Transverse colon (tissue), 4 donors: ENCODE measurements at regions of chr5 and their contacts with region 1.

Region 1: GRCh38 chr5:103475629-103476240 is 86.9 kb downstream of the NUDT12 start:
- DNase-seq: no peak
- H3K4me3 ChIP-seq: no peak overlapping the region
- H3K27ac ChIP-seq: no peak overlapping the region
- H3K4me1 ChIP-seq: peaks cover 0 to 24% (median 0%) of the 10 kb centered on the region in 4 donors
- H3K27me3 ChIP-seq: no peaks in the 10 kb centered on the region
- CTCF ChIP-seq: peak; percentile 60 to 72 (median 66)
- EP300 ChIP-seq: no peak
- POLR2A ChIP-seq: no peak

Region 2: GRCh38 chr5:103224118-103224893 is 251.4 kb before region 1 on chr5:
- in situ Hi-C with region 1: loop called in 1 of 4 experiments (anchors 10 kb)
- intact Hi-C with region 1: no loop called
- DNase-seq: peak; percentile 20
- H3K4me3 ChIP-seq: no peak overlapping the region
- H3K27ac ChIP-seq: no peak overlapping the region
- H3K4me1 ChIP-seq: no peaks in the 10 kb centered on the region
- H3K27me3 ChIP-seq: no peaks in the 10 kb centered on the region
- CTCF ChIP-seq: peak; percentile 59 to 72 (median 66)
- EP300 ChIP-seq: no peak
- POLR2A ChIP-seq: no peak

Region 3: DNA sequence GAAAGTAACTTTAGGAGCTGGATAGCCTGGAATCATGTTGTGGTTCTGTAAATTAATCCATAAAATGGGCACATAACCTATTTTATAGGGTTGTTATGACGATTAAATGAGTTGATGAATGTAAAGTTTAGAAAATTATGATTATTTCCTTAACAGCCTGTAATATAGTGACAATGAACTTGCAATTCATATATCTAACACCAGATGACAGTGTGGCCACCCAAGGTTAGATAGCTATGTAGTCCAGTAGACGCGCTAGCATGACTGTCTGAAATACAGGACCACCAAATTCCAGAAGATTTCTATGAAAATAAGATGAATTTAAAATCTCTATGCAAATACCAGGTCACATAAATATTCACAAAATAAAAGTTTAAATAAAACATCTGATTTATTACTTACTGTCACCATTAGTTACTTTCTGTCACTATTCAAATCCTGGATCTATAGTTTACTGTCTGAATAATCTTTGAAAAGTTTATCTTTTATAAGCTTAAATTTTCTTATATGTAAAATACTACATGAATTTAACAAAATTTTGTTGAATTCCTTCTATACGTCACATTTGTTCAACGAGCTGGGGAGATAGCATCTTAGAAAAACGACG is 243.2 kb before region 1 on chr5:
- in situ Hi-C with region 1: loop called (anchors 5 to 10 kb)
- intact Hi-C with region 1: loop called (anchors 2 kb)
- DNase-seq: no peak
- H3K4me3 ChIP-seq: no peak overlapping the region
- H3K27ac ChIP-seq: no peak overlapping the region
- H3K4me1 ChIP-seq: peaks cover 0 to 2% (median 1%) of the 10 kb centered on the region in 4 donors
- H3K27me3 ChIP-seq: no peaks in the 10 kb centered on the region
- CTCF ChIP-seq: peak; percentile 82 to 93 (median 92)
- EP300 ChIP-seq: no peak
- POLR2A ChIP-seq: no peak